ENCODE measurements at regions of chr6 and their contacts with region 1.

Region 1: GRCh38 chr6:111159633-111160032 is 72.3 kb downstream of the SLC16A10 start:
- DNase-seq: no peak
- H3K4me3 Mint-ChIP-seq: no peak overlapping the region
- H3K27ac Mint-ChIP-seq: no peak overlapping the region
- H3K4me1 Mint-ChIP-seq: peaks cover 26% of the 10 kb centered on the region
- H3K27me3 Mint-ChIP-seq: peaks cover 3% of the 10 kb centered on the region

Region 2: DNA sequence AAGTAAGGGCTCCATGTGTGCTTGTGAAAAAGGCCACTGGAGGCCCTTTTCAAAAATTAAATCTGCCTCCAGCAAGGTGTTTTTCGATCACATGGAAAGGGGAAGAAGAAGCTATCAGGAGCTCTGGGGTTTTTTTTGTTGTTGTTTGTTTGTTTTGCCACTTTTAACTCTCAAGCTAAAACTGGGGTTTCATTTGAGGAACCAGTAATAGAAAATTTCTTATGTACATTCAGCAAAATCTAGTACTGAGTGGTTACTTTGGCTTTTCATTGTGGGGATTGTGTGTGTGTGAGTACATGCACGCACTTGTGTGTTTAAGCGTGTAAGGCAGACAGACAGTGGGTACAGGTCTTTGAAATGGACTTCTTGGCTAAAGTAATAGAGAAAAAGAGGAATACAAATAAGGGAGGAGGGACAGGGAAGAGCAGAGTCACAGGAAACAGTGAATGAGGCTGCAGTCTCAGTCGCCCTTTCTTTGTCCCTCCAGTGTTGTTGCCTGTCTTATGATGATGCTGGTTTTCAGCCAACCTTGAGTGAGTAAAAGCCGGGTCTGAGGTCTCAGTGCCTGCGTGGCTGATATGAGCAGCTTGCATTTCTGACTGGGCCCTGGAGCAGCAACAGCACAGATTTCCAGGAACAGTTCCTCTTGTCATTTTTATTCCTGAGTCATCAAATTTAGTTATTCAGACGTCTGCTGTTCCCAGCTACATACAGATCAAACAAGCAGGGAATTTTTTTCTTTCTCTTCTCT is 46.1 kb before region 1 on chr6:
- CTCF ChIA-PET with region 1: no interaction called
- POLR2A ChIA-PET with region 1: no interaction called
- intact Hi-C with region 1: loop called (anchors 2 kb)
- DNase-seq: peak; percentile 76
- H3K4me3 Mint-ChIP-seq: no peak overlapping the region
- H3K27ac Mint-ChIP-seq: peak overlapping the region; percentile 82
- H3K4me1 Mint-ChIP-seq: peaks cover 19% of the 10 kb centered on the region
- H3K27me3 Mint-ChIP-seq: no peaks in the 10 kb centered on the region

Region 3: DNA sequence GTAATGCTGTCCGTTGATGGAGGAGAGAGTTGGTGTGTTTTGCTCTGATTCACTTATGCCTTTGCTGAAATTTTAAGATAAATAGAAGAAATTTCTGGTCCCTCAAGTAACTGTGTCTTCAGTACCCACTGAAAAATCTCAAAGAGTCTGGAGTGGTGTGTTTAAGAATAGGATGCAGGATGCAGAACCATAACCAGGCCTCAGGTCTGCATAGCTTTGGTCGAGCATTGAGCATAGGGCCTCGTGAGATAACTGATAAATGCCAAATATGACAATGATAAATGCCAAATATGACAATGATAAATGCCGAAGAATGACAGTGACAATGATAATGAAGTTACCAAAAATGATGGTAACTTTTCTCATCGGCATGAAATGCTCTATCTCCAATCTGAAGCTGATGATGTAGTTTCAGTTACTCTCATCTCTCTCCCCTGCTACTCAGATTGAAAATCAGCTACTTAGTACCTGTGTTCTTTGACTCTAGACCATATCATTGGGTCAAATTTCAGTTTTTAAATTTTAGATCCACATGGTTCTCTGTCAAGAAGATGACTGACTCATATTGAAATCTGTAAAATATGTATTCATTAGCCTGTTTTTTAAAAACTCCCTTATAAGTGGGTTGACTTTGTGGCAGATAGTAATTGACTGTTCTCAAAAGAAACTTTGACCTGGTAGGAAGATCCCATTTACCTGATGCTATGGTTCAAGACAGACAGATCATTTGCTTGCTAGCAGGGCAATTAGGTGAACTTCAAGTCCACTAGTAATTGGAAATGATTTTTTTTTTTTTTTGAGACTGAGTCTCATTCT is 24.3 kb after region 1 on chr6:
- CTCF ChIA-PET with region 1: no interaction called
- POLR2A ChIA-PET with region 1: no interaction called
- intact Hi-C with region 1: loop called (anchors 1 kb)
- DNase-seq: no peak
- H3K4me3 Mint-ChIP-seq: no peak overlapping the region
- H3K27ac Mint-ChIP-seq: no peak overlapping the region
- H3K4me1 Mint-ChIP-seq: peaks cover 10% of the 10 kb centered on the region
- H3K27me3 Mint-ChIP-seq: no peaks in the 10 kb centered on the region

Region 4: GRCh38 chr6:111291336-111292259 is 132.0 kb after region 1 on chr6:
- CTCF ChIA-PET with region 1: no interaction called
- POLR2A ChIA-PET with region 1: no interaction called
- intact Hi-C with region 1: no loop called
- DNase-seq: no peak
- H3K4me3 Mint-ChIP-seq: no peak overlapping the region
- H3K27ac Mint-ChIP-seq: no peak overlapping the region
- H3K4me1 Mint-ChIP-seq: peaks cover 30% of the 10 kb centered on the region
- H3K27me3 Mint-ChIP-seq: no peaks in the 10 kb centered on the region

Measured in activated CD4-positive, alpha-beta memory T cell treated with anti-CD3 and anti-CD28 coated beads for 36 hours (primary cell).